SK-N-SH (cell line): ENCODE measurements at regions of chr11 and their contacts with region 1.

Region 1: DNA sequence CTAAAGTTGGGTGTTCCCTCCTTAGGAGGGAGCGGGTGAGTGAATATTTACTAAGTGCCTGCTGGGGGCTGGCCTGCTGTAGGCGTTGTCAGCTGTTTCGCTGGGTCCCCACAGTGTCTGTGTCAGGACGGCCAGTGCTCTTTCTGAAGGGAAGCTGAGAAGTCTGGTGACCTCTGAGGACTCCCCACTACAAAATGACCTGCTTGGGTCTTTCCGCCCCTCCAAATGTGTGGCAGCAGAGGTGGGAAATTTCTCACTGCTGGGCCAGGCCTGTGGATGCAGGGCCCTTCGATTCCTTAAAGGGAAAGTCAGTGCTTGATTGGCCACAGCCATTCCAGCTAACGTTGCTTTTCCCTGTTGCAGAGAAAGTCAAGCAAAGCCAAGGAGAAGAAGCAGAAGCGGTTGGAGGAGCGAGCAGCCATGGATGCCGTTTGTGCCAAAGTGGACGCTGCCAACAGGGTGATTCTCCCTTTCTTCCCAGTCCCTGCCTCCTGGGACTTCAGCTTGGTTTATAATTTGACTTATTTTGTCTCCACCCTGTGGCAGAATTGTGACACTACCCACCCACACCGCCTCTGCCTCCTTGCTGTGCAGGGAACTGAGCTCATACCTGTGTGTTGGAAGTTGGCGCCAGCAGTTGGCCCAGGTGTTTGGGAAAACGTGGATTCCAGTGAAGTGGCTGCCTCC is 6.8 kb downstream of the NAA40 start:
- DNase-seq: peak; percentile 84
- H3K4me3 ChIP-seq: no peak overlapping the region; a peak in 1 of 4 replicates
- H3K27ac ChIP-seq: peak overlapping the region in 1 of 2 experiments; percentile 29; a peak in 2 of 4 replicates
- H3K4me1 ChIP-seq: peaks cover 9 to 22% of the 10 kb centered on the region in 2 experiments; a peak in 3 of 4 replicates
- H3K27me3 ChIP-seq: no peaks in the 10 kb centered on the region
- CTCF ChIP-seq: peak; percentile 71
- EP300 ChIP-seq: no peak
- RAD21 ChIP-seq: peak; percentile 89

Region 2: DNA sequence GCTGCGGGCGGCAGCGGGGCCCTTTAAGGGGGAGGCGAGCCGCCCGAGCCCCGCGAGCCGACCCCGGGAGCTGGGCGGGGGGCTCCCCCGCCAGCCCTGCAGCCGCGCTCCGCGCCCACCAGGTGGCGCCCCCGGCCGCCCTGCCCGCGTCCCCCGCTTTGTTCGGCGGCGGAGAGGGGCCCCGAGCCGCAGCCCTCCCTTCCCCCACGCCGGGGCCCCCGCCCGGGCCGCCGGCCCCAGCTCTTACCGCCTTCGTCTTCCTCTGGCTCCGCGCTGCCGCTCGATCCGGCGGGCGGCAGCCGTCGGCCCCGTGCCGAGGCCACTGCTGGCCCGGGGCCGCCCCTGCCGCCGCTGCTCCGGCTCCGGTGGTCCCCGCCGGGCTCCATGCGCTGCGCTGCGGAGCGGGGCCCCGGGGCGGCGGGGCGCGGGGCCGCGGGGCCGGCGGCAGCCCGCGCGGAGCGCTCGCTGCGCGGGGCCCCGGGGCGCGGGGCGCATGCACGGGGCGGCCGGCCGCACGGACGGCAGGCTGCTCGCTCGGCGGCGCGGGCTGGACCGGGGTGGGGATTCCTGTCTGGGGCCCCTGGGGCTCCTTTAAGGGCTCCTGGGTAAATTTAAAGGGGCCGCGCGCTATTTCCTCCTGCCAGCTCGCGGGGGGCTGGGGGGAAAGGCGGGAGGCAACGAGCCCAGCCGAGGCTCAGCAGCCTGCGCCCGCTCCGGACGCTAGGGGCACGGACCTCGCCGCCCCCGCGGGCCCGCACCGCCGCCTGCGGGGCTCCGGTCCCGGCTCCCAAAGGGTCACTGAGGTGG is 177.2 kb before region 1 on chr11 and contains the start of gene ZFTA:
- CTCF ChIA-PET with region 1: interaction called, 43 read pairs
- POLR2A ChIA-PET with region 1: interaction called, 4 read pairs
- DNase-seq: peak; percentile 98
- H3K4me3 ChIP-seq: peak within 1 kb of the TSS; percentile 78 to 89
- H3K27ac ChIP-seq: peak within 1 kb of the TSS; percentile 59 to 84
- H3K4me1 ChIP-seq: peaks cover 0 to 22% of the 10 kb centered on the region in 2 experiments; a peak in 1 of 4 replicates
- H3K27me3 ChIP-seq: no peaks in the 10 kb centered on the region
- CTCF ChIP-seq: peak; percentile 43
- EP300 ChIP-seq: no peak
- RAD21 ChIP-seq: peak; percentile 61
- polyA plus RNA-seq, gene ZFTA: 8.7 and 10.3 TPM in 2 replicates

Region 3: DNA sequence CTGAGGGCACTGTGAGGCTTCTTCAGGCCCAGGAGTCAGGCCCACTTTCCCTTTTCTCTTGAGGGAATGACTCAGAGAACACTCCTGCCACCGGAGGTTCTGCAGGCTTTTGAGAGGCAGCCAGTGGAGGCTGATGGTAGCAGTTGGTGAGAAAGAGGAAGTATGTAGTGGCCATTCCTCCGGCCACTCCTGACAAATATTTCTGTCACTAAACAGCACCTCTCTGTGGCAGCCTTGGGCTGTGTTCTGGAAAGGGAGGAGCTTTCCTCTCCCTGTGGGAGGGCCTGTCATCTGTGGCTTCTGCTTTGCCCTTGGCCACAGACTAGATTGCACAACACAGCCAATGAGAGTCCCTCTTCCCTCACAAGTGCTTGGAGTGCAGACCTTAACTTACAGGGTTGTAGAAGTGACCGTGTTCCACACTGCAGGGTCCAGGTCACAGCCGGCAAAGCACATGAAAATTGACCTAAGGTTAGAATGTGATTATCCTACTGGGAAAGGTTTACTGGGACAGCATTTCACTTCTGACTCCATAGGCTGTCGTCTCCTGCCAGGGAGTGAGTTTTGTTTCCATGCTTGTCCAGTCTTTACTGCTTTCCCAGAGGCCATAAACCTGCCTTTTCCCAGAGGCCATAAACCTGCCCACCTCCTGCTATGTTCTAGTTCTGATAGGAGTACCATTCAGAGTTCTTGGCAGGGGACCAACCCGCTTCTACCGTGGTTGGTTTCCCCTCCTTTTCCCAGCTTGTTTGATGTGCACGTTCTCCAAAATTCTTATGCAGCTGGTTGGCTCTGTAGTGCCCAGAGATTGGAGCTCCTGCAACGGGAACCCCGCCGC is 73.4 kb before region 1 on chr11:
- CTCF ChIA-PET with region 1: interaction called, 11 read pairs
- POLR2A ChIA-PET with region 1: no interaction called
- DNase-seq: peak; percentile 80
- H3K4me3 ChIP-seq: no peak overlapping the region
- H3K27ac ChIP-seq: peak overlapping the region; percentile 25 to 65; a peak in 3 of 4 replicates
- H3K4me1 ChIP-seq: peaks cover 16 to 34% of the 10 kb centered on the region in 2 experiments; a peak in 3 of 4 replicates
- H3K27me3 ChIP-seq: no peaks in the 10 kb centered on the region
- CTCF ChIP-seq: peak; percentile 53
- EP300 ChIP-seq: no peak
- RAD21 ChIP-seq: peak; percentile 71

Region 4: GRCh38 chr11:63916837-63917691 is 28.6 kb before region 1 on chr11 and contains the start of gene RCOR2:
- CTCF ChIA-PET with region 1: interaction called, 113 read pairs
- POLR2A ChIA-PET with region 1: interaction called, 14 read pairs
- DNase-seq: peak; percentile 98
- H3K4me3 ChIP-seq: peak within 1 kb of the TSS; percentile 58 to 64
- H3K27ac ChIP-seq: peak within 1 kb of the TSS in 1 of 2 experiments; percentile 98; a peak in 2 of 4 replicates
- H3K4me1 ChIP-seq: peaks cover 4 to 44% of the 10 kb centered on the region in 2 experiments; a peak in 3 of 4 replicates
- H3K27me3 ChIP-seq: no peaks in the 10 kb centered on the region
- CTCF ChIP-seq: no peak
- EP300 ChIP-seq: no peak
- RAD21 ChIP-seq: no peak
- polyA plus RNA-seq, gene RCOR2: 1.1 and 1.4 TPM in 2 replicates

Region 5: DNA sequence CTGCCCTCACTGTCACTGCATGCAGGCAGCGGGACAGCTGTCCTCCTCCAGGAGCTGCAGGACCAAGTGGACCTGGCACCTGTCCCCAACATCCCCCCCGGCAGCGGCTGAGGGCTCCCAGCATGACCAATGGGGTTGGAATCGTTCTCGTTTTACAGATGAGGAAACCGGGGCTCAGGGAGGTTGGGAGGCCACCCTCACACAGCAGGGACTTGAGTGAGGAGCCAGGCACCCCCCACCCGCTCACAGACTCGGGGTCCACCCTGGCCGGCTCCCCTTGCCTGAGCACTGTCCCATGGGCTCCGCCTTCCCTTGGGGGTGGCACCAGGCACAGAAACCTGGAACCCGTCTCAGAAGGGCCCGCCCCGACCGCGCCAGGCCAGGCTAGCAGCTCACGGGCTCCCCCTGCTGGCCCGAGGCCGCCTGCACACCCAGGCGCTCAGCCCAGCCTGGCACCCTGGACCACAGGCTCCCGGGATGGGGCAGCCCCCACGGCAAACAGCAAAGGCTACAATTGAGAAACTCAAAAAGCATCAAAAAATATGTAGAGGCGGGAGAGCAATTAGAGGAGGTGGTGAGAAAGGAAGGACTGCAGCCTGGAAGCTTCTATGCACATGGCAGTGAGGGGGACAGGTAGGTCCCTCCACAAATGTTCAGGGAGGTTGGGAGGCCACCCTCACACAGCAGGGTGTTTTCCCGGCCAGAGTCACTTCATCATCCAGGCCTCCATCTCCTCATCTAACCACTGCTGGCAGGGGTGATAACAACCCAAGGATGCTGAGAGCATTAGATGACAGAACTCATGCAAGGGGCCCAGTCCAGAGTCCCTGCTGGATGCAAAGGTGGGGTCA is 207.4 kb after region 1 on chr11:
- CTCF ChIA-PET with region 1: interaction called, 29 read pairs
- POLR2A ChIA-PET with region 1: no interaction called
- DNase-seq: peak; percentile 95
- H3K4me3 ChIP-seq: peak overlapping the region in 1 of 2 experiments; percentile 42; a peak in 1 of 4 replicates
- H3K27ac ChIP-seq: peak overlapping the region in 1 of 2 experiments; percentile 55; a peak in 1 of 4 replicates
- H3K4me1 ChIP-seq: peaks cover 0 to 55% of the 10 kb centered on the region in 2 experiments; a peak in 2 of 4 replicates
- H3K27me3 ChIP-seq: no peaks in the 10 kb centered on the region
- CTCF ChIP-seq: peak; percentile 99
- EP300 ChIP-seq: no peak
- RAD21 ChIP-seq: peak; percentile 84